ENCODE measurements at regions of chr1 and their contacts with region 1.

Region 1: GRCh38 chr1:36846357-36846756 is 188.0 kb downstream of the GRIK3 start:
- DNase-seq: no peak
- ATAC-seq: no peak
- H3K4me3 ChIP-seq: no peak overlapping the region
- H3K27ac ChIP-seq: no peak overlapping the region
- H3K4me1 ChIP-seq: no peaks in the 10 kb centered on the region
- H3K27me3 ChIP-seq: no peaks in the 10 kb centered on the region

Region 2: DNA sequence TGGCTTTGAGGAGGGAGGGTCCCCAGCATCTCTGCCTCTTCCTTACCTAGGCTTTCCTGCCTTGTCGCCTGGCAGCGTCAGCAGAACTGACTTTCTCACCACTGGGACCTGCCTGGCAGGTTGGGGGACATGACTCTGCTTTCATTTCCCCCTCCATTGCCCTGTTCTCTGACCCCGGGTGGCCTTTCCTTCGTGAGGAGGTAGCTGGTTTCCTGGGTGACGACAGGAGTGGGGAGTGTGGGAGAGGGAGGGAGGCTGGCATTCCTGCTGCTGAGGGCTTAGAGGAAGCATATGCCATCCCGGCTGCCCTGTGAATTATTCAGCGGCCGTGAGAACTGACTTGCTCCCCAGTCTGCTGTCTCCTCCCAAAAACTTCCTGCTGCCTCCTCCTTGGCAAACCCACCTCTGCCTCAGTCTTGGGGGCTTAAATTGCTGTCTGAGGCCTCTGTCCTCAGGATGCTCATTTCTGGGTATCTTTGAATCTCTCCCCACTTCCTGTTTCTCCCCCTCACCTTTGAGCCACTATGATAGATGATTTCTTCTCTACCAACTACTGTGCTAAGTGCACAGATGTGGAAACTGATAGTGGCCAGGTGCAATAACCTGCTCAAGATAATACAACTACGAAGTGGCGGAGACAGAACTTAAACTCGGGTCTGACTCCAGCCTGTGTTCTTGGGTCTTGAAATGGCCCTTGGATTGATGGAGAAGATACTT is 181.6 kb before region 1 on chr1:
- intact Hi-C with region 1: loop called in 1 of 4 experiments (anchors 10 kb)
- DNase-seq: no peak
- ATAC-seq: no peak
- H3K4me3 ChIP-seq: no peak overlapping the region
- H3K27ac ChIP-seq: no peak overlapping the region
- H3K4me1 ChIP-seq: no peaks in the 10 kb centered on the region
- H3K27me3 ChIP-seq: no peaks in the 10 kb centered on the region

Region 3: GRCh38 chr1:36771660-36772284 is 74.6 kb before region 1 on chr1:
- intact Hi-C with region 1: no loop called
- DNase-seq: no peak
- ATAC-seq: no peak
- H3K4me3 ChIP-seq: no peak overlapping the region
- H3K27ac ChIP-seq: no peak overlapping the region
- H3K4me1 ChIP-seq: no peaks in the 10 kb centered on the region
- H3K27me3 ChIP-seq: peaks cover 5% of the 10 kb centered on the region